Ascending aorta (tissue), 2 donors: ENCODE measurements at regions of chr6 and their contacts with region 1.

Region 1: GRCh38 chr6:137313928-137314855 is 95.0 kb upstream of the IFNGR1 start:
- DNase-seq: peak in 1 of 2 donors; percentile 79
- H3K4me3 ChIP-seq: peak overlapping the region in 1 of 2 donors; percentile 23
- H3K27ac ChIP-seq: no peak overlapping the region
- H3K4me1 ChIP-seq: no peaks in the 10 kb centered on the region
- H3K27me3 ChIP-seq: no peaks in the 10 kb centered on the region
- CTCF ChIP-seq: peak; percentile 71 to 84 (median 78)

Region 2: DNA sequence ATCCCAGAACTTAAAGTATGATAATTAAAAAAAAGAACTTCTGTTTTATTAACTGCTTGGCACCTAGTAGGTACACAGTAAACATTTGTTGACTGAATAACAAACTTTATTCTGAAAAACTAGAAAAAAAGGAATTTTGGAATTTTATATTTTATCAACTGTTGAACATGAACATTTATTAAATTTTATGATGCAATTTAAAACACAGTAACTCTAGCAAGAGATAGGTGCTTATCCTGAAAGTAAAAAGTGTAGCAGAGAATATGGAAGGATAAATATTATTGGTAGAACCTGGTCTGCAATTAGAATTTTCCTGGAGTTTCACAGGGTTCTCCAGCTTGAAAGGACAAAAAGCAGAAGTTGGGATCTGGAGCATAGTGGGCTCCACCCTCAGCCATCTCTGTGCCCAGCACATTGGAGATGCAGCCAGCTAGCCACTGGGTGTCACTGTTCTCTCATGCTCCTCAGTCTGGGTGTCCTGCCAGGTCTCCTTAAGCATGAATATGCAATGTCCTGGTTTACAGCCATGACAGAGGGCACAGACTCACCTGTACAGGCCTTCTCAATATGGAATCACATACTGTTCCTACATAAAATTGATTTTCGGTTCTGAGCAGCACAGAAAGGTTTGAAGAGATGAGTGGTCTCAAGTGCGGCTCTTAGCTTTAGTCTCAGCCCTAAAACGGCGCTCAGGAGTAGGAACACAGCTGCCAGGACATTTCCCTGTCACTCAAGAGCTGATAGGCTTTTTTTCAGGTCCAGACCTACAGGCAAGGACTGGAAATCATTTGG is 237.7 kb before region 1 on chr6:
- intact Hi-C with region 1: loop called (anchors 5 kb)
- DNase-seq: peak in 1 of 2 donors; percentile 67
- H3K4me3 ChIP-seq: no peak overlapping the region
- H3K27ac ChIP-seq: no peak overlapping the region
- H3K4me1 ChIP-seq: no peaks in the 10 kb centered on the region
- H3K27me3 ChIP-seq: no peaks in the 10 kb centered on the region
- CTCF ChIP-seq: peak; percentile 35 to 58 (median 45)

Region 3: GRCh38 chr6:137094411-137095008 is 219.7 kb before region 1 on chr6:
- intact Hi-C with region 1: loop called (anchors 1 kb)
- DNase-seq: peak in 1 of 2 donors; percentile 71
- H3K4me3 ChIP-seq: peak overlapping the region in 1 of 2 donors; percentile 5
- H3K27ac ChIP-seq: no peak overlapping the region
- H3K4me1 ChIP-seq: no peaks in the 10 kb centered on the region
- H3K27me3 ChIP-seq: no peaks in the 10 kb centered on the region
- CTCF ChIP-seq: peak; percentile 47 to 74 (median 50)

Region 4: DNA sequence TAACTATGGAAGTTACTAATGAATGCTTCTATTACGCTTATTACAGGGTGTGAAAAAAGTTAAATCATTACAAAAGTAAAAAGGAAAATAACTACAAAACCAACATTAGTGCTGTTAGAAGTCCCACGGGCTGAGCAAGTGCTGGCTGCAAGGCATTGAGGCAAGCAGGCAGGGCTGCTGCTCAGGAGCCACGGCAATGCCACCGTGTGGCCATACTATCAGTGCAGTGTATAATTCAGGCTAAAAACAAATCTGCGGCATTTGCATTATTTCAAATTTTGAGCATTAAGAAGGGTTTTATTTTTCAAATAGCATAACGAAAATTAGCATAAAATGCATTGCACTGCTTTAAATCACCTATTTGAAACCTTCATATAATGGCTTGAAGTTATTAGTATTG is 112.1 kb before region 1 on chr6:
- intact Hi-C with region 1: loop called (anchors 5 kb)
- DNase-seq: no peak
- H3K4me3 ChIP-seq: no peak overlapping the region
- H3K27ac ChIP-seq: no peak overlapping the region
- H3K4me1 ChIP-seq: peaks cover 0 to 9% of the 10 kb centered on the region in 2 donors
- H3K27me3 ChIP-seq: no peaks in the 10 kb centered on the region
- CTCF ChIP-seq: peak in 2 of 3 experiments; percentile 5

Region 5: GRCh38 chr6:137218917-137219663 is 95.1 kb before region 1 on chr6 and contains the start of gene IFNGR1:
- intact Hi-C with region 1: loop called (anchors 5 kb)
- DNase-seq: peak; percentile 82 to 98
- H3K4me3 ChIP-seq: peak within 1 kb of the TSS; percentile 87 to 93
- H3K27ac ChIP-seq: peak within 1 kb of the TSS; percentile 99
- H3K4me1 ChIP-seq: peaks cover 6 to 46% of the 10 kb centered on the region in 2 donors
- H3K27me3 ChIP-seq: no peaks in the 10 kb centered on the region
- CTCF ChIP-seq: peak in 1 of 3 experiments; percentile 2
- total RNA-seq, gene IFNGR1: 47.7 TPM

Region 6: GRCh38 chr6:137271245-137272183 is 42.7 kb before region 1 on chr6:
- intact Hi-C with region 1: loop called (anchors 2 kb)
- DNase-seq: no peak
- H3K4me3 ChIP-seq: no peak overlapping the region
- H3K27ac ChIP-seq: no peak overlapping the region
- H3K4me1 ChIP-seq: no peaks in the 10 kb centered on the region
- H3K27me3 ChIP-seq: no peaks in the 10 kb centered on the region
- CTCF ChIP-seq: peak; percentile 58 to 86 (median 85)

Region 7: DNA sequence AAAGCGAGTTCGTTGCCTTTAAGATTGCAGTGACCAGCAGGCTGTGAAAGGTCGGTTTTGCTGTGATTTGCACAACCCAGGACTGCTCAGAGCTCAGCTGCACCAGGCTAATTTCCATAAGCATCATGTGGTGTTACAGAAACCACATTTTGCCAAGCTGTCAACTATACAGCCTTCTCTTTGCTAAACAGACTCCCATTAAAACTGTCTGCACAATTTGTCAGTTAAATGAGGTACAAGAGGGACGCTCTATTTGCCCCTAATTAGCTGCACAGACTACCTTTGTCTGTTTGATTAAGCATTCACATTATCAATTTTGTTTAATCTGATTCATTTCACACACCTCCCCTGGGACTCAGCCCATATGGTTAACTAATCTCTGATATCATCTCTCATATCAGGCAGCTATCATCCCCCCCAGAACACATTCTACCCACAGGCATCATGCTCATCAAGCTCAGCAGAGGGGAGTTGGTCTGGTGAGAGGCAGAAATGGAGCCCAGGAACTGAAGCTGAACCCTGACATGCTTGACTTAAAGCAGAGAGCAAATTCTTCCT is 117.9 kb after region 1 on chr6:
- intact Hi-C with region 1: no loop called
- DNase-seq: no peak
- H3K4me3 ChIP-seq: no peak overlapping the region
- H3K27ac ChIP-seq: no peak overlapping the region
- H3K4me1 ChIP-seq: no peaks in the 10 kb centered on the region
- H3K27me3 ChIP-seq: no peaks in the 10 kb centered on the region
- CTCF ChIP-seq: no peak